ENCODE measurements at regions of chr11 and their contacts with region 1.

Region 1: DNA sequence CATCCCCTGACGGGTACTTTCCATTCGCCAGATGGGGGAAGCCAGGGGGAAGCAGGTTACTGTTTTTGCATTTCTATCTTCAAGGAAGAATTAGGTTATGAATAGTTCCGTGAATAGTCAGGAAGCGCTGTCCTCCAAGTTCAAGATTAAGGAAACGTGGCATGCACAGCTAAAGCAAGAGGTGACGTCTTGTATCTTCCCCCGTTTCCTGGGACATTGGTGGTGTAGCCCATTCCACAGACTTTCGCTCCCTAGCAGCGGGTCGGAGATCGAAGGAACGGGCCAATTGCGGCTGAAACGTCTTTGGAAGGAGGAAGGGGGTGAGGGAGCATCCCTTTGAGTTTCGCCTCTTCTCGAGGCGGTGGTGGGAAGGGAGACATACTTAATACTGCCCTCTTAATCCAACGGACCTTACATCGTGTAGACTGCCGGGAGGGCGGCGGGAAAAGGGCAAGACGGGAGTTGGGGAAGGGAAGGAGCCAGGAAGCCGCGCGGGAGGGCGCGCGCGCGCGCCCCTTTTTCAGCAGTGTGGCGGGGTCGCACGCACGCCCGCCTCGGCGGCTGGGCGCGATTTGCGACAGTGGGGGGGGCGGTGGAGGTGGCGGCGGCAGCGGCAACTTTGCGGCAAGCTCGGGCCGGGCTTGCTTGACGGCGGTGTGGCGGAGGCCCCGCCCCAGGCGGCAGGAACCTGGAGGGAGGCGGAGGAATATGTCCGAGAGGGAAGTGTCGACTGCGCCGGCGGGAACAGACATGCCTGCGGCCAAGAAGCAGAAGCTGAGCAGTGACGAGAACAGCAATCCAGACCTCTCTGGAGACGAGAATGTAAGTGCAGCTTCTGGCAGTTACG is at the start of gene EED:
- DNase-seq: peak; percentile 99 to 100
- H3K4me3 ChIP-seq: peak within 1 kb of the TSS; percentile 74
- H3K4me3 Mint-ChIP-seq: no peak within 1 kb of the TSS
- H3K27ac Mint-ChIP-seq: no peak within 1 kb of the TSS
- H3K4me1 ChIP-seq: peaks cover 35% of the 10 kb centered on the region
- H3K4me1 Mint-ChIP-seq: peaks cover 45% of the 10 kb centered on the region
- H3K27me3 ChIP-seq: no peaks in the 10 kb centered on the region
- H3K27me3 Mint-ChIP-seq: no peaks in the 10 kb centered on the region
- CTCF ChIP-seq: no peak
- total RNA-seq, gene EED: 68.3 and 75.5 TPM in 2 replicates

Region 2: DNA sequence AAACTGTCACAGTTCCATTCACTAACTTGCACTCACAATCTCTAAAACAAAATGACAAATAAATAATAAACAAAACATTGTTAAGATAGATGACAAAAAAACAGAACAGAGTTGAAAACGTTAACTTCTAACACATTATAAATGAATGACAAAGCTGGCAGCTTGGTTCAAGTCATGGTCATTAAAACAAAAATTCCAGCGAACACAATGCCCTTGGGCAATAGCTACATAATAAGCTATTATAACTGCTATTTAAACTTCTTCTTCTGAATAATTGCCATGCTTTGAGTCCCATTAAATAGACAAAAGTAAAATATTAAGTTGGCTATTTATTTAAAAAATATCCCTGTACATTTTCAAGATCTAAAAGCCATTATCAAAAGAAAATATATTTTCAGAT is 230.5 kb before region 1 on chr11:
- CTCF ChIA-PET with region 1: no interaction called
- POLR2A ChIA-PET with region 1: no interaction called
- intact Hi-C with region 1: no loop called
- DNase-seq: no peak
- H3K4me3 ChIP-seq: no peak overlapping the region
- H3K4me3 Mint-ChIP-seq: no peak overlapping the region
- H3K27ac Mint-ChIP-seq: no peak overlapping the region
- H3K4me1 ChIP-seq: no peaks in the 10 kb centered on the region
- H3K4me1 Mint-ChIP-seq: peaks cover 11% of the 10 kb centered on the region
- H3K27me3 ChIP-seq: no peaks in the 10 kb centered on the region
- H3K27me3 Mint-ChIP-seq: no peaks in the 10 kb centered on the region
- CTCF ChIP-seq: no peak

Region 3: GRCh38 chr11:86052693-86053641 is 191.8 kb before region 1 on chr11:
- CTCF ChIA-PET with region 1: no interaction called
- POLR2A ChIA-PET with region 1: interaction called, 10 read pairs
- intact Hi-C with region 1: no loop called
- DNase-seq: peak; percentile 65 to 75
- H3K4me3 ChIP-seq: no peak overlapping the region
- H3K4me3 Mint-ChIP-seq: peak overlapping the region; percentile 22
- H3K27ac Mint-ChIP-seq: peak overlapping the region; percentile 29
- H3K4me1 ChIP-seq: peaks cover 29% of the 10 kb centered on the region
- H3K4me1 Mint-ChIP-seq: peaks cover 26% of the 10 kb centered on the region
- H3K27me3 ChIP-seq: no peaks in the 10 kb centered on the region
- H3K27me3 Mint-ChIP-seq: no peaks in the 10 kb centered on the region
- CTCF ChIP-seq: no peak

Region 4: DNA sequence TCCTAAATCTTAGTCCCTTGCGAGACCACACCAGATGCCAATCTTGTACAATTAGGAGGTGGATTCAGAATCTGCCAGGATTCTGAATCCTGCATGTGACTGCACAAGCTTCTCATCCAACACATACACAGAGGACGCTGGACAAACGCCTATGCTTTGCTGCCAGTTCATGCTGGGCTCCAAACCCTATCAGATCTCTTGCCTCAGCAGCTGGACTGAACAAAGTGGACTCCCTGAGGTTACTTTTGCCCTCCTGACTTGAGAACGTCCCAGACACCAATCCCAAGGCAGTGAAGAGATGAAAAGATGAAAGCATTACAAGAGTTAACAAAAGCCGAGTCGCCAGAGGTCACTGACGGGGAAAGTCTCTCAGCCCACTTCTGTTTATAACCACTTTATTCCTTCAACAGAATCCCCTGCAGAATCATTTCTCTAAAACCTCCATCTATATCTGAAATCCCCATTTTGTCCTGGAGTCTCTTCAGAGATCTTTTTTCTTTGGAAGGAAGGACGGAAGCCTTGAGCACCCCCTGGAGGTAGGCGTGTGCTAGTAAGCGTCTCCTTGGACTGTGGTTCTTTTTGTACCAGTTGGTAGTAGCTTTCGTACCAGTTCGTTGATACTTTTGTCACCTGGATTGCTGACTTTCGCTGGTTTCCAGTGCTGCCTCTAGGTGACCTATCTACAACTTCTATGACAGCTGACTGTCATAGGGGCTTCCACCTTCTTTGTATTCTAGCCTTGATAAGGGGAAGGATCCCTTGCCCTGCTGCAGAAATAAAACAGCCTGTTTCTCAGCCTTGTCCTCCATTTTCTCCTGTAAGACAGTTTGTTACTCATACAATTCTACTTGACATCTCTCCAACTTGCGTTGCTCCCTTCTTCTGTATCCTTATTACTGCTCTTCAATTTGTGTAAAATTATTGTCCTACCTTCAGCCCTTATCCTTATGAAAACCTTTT is 26.3 kb before region 1 on chr11:
- CTCF ChIA-PET with region 1: interaction called, 7 read pairs
- POLR2A ChIA-PET with region 1: no interaction called
- intact Hi-C with region 1: loop called (anchors 1 kb)
- DNase-seq: peak; percentile 74 to 88
- H3K4me3 ChIP-seq: no peak overlapping the region
- H3K4me3 Mint-ChIP-seq: peak overlapping the region; percentile 15
- H3K27ac Mint-ChIP-seq: peak overlapping the region; percentile 25
- H3K4me1 ChIP-seq: peaks cover 12% of the 10 kb centered on the region
- H3K4me1 Mint-ChIP-seq: peaks cover 22% of the 10 kb centered on the region
- H3K27me3 ChIP-seq: no peaks in the 10 kb centered on the region
- H3K27me3 Mint-ChIP-seq: no peaks in the 10 kb centered on the region
- CTCF ChIP-seq: peak; percentile 98

Region 5: GRCh38 chr11:86274503-86274902 is 29.8 kb after region 1 on chr11:
- CTCF ChIA-PET with region 1: no interaction called
- POLR2A ChIA-PET with region 1: interaction called, 3 read pairs
- intact Hi-C with region 1: loop called (anchors 1 kb)
- DNase-seq: peak in 1 of 2 experiments; percentile 57
- H3K4me3 ChIP-seq: no peak overlapping the region
- H3K4me3 Mint-ChIP-seq: no peak overlapping the region
- H3K27ac Mint-ChIP-seq: no peak overlapping the region
- H3K4me1 ChIP-seq: no peaks in the 10 kb centered on the region
- H3K4me1 Mint-ChIP-seq: peaks cover 10% of the 10 kb centered on the region
- H3K27me3 ChIP-seq: no peaks in the 10 kb centered on the region
- H3K27me3 Mint-ChIP-seq: no peaks in the 10 kb centered on the region
- CTCF ChIP-seq: peak; percentile 46 to 54

Region 6: GRCh38 chr11:86291466-86292262 is 46.9 kb after region 1 on chr11:
- CTCF ChIA-PET with region 1: no interaction called
- POLR2A ChIA-PET with region 1: no interaction called
- intact Hi-C with region 1: loop called (anchors 1 kb)
- DNase-seq: peak; percentile 63 to 82
- H3K4me3 ChIP-seq: no peak overlapping the region
- H3K4me3 Mint-ChIP-seq: no peak overlapping the region
- H3K27ac Mint-ChIP-seq: no peak overlapping the region
- H3K4me1 ChIP-seq: 0 out of 2 replicates have a peak, but pooled peaks cover 4% of the 10 kb centered on the region
- H3K4me1 Mint-ChIP-seq: no peaks in the 10 kb centered on the region
- H3K27me3 ChIP-seq: no peaks in the 10 kb centered on the region
- H3K27me3 Mint-ChIP-seq: no peaks in the 10 kb centered on the region
- CTCF ChIP-seq: peak; percentile 92 to 98